ENCODE measurements at regions of chr1 and their contacts with region 1.

Region 1: DNA sequence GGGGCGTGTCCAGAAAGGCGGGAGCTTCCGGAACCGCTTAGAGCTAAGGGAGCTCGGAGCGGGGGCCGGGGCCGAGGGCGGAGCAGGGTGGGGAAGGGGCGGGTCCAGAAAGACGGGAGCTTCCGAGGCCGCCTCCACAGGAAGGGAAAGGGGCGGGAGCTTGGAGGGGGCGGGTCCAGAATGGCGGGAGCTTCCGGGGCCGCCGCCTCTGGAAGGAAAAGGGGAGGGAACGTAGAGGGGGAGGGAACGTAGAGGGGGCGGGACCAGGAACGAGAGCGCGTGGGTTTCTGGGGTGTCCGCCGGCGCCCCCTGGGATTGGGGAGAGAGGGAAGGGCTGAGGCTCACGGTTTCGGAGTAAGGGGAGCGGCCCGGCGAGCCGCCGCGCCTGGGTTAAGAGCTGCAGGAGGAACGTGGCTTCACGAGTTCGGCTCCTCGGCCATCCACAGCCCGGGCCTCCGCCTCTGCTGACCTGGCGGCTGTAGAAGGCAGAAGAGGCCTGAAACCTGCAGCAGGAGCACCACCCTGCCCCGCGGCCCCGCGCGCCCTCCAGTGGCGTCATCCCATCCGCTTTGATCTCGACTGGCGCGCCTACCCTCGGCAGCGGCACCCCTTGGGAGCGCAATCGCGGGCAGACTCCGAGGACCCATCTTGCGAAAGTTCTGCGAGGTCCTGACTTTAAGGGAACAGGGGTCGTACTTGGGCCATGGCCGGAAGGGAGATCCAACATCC is 22.9 kb upstream of the HPDL start:
- DNase-seq: peak; percentile 98
- H3K4me3 ChIP-seq: peak overlapping the region; percentile 72
- H3K27ac ChIP-seq: peak overlapping the region; percentile 67
- H3K27me3 ChIP-seq: no peaks in the 10 kb centered on the region
- CTCF ChIP-seq: peak; percentile 78

Region 2: DNA sequence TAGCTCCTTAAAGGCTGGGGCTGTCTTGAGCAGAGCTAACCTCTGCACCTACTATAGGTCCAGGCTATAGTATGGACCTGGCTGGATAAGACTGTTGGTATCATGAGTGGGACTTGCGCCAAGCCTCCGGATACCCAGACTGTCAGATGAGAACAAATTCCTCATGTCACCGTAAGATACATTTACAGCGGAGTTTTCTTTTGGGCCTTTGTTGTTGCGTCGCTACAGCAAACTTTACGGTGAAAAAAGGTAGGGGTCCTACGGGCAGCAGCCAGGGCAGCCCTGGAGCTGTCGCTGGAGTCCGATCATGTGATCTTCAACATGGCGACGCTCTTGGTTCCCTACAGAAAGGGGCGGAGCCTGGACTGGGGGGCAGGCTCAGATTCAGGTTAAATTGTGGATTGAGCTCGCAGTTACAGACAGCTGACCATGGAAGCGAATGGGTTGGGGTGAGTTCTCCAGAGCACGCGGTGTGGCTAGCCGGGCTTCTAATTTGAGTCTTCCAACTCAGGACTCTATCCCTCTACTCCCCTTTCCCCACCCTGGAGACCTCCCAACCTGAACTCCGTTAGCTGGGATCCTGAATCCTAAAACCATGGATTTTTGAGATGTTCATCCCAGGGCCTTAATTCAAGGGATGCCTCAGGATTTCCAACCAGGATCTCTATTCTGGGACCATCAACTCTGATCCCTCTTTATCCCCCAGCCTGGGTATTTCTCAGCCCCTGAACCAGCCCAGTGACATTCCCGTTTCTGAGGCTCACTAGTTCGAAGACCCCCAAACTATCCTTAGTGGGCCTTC is 291.7 kb before region 1 on chr1 and contains the start of gene UROD:
- in situ Hi-C with region 1: loop called (anchors 25 kb)
- DNase-seq: peak; percentile 97
- H3K4me3 ChIP-seq: peak within 1 kb of the TSS; percentile 87
- H3K27ac ChIP-seq: peak within 1 kb of the TSS; percentile 60
- H3K27me3 ChIP-seq: no peaks in the 10 kb centered on the region
- CTCF ChIP-seq: no peak

Measured in brain microvascular endothelial cell (primary cell).